GM10248 (cell line): ENCODE measurements at regions of chr2 and their contacts with region 1.

Region 1: GRCh38 chr2:44479122-44479887 is 117.6 kb downstream of the CAMKMT start:
- DNase-seq: peak; percentile 79
- CTCF ChIP-seq: peak; percentile 99

Region 2: GRCh38 chr2:44392338-44392943 is 86.9 kb before region 1 on chr2:
- CTCF ChIA-PET with region 1: interaction called, 10 read pairs
- POLR2A ChIA-PET with region 1: no interaction called
- DNase-seq: no peak
- CTCF ChIP-seq: peak; percentile 48

Region 3: GRCh38 chr2:44462934-44463849 is 16.1 kb before region 1 on chr2:
- CTCF ChIA-PET with region 1: interaction called, 45 read pairs
- POLR2A ChIA-PET with region 1: no interaction called
- DNase-seq: no peak
- CTCF ChIP-seq: no peak

Region 4: GRCh38 chr2:44498551-44498950 is 19.2 kb after region 1 on chr2:
- CTCF ChIA-PET with region 1: interaction called, 16 read pairs
- POLR2A ChIA-PET with region 1: no interaction called
- DNase-seq: no peak
- CTCF ChIP-seq: no peak

Region 5: DNA sequence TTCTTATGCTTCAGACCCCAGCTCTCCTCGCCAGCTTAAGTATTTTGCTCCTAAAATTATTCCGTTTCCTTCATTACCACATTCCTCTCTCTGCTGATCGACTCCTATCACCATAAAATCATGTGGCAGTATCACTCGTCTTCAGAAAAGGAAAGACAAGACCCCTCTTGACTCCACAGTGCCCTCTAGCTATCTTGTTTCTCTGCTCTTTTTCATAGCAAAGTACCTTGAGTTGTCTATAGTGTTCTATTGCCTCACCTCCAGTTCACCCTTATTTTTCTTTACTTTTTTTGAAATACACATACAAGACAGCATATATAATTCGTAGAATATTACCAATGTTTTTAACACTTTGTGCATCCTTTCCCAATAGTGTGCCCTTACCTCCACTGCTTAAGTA is 189.0 kb after region 1 on chr2:
- CTCF ChIA-PET with region 1: interaction called, 20 read pairs
- POLR2A ChIA-PET with region 1: no interaction called
- DNase-seq: peak; percentile 37
- CTCF ChIP-seq: peak; percentile 36